Posterior vena cava (tissue), 2 donors: ENCODE measurements at regions of chr1 and their contacts with region 1.

Region 1: GRCh38 chr1:225544263-225544662 is 108.7 kb downstream of the ENAH start:
- DNase-seq: no peak

Region 2: GRCh38 chr1:225474986-225475820 is 69.1 kb before region 1 on chr1:
- intact Hi-C with region 1: no loop called
- DNase-seq: peak; percentile 90

Region 3: DNA sequence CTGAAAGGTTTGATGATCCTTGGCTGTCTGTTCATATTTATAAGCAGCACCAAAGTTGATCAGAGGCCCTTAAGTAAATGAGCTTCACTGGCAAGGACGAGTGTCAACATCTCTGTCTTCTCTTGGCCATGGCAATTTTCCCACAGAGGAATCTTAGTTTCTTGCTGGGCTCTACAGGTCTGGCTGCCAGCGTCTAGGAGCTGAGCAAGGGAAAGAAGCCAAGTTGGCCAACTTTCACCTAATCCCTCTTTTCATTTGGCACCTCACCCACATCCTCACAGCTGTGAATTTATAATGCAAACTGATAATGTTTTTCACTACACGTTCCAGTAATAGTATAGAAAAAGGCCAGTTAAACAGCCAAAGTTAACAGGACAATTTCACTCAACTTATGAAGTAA is 17.4 kb before region 1 on chr1:
- intact Hi-C with region 1: loop called in 1 of 2 experiments (anchors 2 kb)
- DNase-seq: no peak

Region 4: DNA sequence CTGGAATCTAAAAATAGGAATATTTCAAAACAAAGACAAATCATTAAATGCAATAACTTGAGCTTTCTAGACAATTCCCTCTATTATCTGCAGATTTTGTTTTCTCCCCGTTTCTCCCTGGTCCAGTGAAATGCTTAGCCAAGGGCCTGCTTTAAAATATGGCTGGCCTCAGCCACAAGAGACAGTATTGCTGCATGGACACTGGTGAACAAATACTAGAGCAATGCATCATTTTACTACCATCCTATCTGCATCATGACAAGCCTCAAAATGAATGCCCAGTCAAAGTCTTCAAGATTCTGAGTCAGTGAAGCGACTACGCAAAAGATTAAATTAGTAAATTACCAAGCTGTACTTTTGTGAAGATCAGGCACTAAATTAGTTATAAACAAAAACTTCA is 28.2 kb after region 1 on chr1:
- intact Hi-C with region 1: no loop called
- DNase-seq: no peak

Region 5: DNA sequence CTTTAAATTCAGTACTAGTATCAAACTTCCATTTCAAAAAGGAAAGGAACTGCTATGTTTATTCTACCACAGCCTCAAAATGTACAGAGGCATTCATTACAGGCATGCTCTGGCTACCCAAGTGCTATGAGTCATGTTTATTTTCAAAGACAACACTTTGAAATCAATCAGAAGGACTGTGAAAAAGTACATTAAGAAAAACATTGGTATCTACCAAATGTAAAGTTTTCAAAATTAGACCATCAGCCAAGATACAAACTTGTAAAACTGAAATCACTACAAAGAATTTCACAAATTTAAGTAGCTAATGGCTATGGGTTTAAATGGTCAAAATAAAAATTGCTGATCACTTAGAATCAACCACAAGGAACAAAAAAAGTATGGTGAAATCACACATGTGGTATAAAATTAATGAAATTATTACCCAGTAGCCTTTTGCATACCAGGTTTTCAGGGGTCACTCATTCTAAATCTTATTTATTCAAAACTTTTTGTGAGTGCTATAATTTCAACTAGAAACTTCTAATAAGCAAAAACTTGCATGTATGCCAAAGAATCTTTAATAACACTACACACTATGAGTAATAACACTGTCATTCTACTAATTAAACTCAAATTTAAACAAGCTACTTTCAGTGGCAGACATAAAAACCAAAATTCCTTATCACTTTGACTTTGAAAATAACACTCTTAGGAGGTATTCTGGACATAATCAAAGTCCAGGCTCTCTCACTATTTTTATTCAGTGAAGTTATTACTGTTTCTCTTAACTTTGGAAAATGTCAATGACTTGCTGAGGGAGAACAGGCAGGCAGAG is 59.5 kb after region 1 on chr1:
- intact Hi-C with region 1: no loop called
- DNase-seq: no peak